ENCODE measurements at regions of chr1 and their contacts with region 1.

Region 1: DNA sequence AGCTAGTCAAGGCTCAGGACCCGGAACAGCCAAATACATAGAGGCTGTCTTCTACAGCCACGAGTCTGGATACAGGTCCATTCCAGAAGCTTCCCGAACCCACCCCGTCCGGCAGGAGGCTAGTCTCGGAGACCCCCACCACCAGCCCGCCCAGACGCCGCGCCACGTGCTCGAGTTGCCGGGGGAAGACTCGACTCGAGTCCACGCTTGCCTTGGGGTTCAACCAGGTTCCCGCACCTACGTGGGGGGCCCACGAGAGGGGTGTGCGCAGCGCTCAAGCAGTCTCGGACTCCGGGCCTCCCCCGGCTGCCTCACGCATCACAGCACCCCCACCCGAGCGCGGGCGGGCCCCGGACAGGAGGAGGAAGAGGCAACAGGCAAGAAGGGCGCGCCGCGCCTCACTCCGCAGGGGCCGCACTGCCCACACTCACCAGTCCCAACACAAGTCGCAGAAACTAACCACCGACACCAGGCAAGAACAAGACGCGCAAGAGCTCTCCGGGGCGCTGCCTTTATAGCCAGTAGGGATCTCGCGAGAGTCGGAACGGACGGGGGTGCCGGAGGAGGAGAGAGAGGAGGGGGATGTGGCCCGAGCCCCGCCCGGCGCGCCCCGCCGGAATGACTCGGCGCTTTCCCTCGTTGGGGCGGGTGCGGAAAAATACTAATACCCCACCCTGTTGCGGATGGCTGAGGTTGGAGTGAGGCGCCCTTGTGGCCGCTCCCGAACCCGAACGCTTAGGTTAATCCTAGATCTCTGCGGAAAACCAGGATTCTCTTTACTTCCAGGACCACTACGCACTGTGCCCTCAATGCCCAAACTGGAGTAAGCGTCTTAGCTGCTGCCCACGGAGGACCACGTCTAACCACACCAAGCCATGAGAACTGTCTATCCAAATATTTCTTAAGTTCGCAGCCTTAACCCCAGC is at the start of gene PRDX1:
- DNase-seq: peak; percentile 67
- H3K4me3 ChIP-seq: peak within 1 kb of the TSS; percentile 95
- CTCF ChIP-seq: peak; percentile 22

Region 2: DNA sequence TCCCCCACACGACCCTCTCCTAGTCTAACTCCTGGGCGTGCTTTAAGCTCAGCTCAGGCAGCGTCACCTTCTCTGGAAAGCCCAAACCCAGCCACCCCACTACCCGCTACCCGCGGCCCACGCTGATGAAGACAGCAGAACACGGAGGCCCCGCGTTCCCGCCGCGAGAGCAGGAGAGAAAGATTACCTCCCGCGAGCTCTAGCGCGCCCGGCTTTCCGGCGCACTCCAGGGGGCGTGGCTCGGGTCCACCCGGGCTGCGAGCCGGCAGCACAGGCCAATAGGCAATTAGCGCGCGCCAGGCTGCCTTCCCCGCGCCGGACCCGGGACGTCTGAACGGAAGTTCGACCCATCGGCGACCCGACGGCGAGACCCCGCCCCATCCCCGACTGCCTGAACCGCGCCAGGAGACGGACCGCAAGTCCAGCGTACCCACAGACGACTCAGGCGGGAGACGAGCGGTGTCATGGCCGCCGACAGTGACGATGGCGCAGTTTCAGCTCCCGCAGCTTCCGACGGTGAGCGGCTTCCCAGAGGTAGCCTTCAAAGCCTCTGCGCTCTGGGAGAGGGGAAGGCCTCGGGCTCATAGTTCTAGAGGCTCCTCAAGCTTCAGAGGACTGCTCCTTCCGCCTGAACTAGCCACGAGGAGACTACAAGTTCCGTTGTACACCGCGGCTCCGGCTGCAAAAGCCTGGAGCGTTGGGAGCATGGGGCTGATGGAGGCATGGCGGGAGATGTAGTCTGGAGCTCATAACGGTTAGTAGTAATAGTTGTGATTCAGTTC is 181.7 kb before region 1 on chr1 and contains the starts of genes MUTYH and TOE1:
- CTCF ChIA-PET with region 1: no interaction called
- POLR2A ChIA-PET with region 1: interaction called, 21 read pairs
- DNase-seq: peak; percentile 36
- H3K4me3 ChIP-seq: peak within 1 kb of the TSS; percentile 97
- CTCF ChIP-seq: no peak

Region 3: GRCh38 chr1:45499415-45499769 is 22.3 kb before region 1 on chr1:
- CTCF ChIA-PET with region 1: interaction called, 3 read pairs
- POLR2A ChIA-PET with region 1: interaction called, 54 read pairs
- DNase-seq: no peak
- H3K4me3 ChIP-seq: peak overlapping the region; percentile 93
- CTCF ChIP-seq: no peak

Region 4: DNA sequence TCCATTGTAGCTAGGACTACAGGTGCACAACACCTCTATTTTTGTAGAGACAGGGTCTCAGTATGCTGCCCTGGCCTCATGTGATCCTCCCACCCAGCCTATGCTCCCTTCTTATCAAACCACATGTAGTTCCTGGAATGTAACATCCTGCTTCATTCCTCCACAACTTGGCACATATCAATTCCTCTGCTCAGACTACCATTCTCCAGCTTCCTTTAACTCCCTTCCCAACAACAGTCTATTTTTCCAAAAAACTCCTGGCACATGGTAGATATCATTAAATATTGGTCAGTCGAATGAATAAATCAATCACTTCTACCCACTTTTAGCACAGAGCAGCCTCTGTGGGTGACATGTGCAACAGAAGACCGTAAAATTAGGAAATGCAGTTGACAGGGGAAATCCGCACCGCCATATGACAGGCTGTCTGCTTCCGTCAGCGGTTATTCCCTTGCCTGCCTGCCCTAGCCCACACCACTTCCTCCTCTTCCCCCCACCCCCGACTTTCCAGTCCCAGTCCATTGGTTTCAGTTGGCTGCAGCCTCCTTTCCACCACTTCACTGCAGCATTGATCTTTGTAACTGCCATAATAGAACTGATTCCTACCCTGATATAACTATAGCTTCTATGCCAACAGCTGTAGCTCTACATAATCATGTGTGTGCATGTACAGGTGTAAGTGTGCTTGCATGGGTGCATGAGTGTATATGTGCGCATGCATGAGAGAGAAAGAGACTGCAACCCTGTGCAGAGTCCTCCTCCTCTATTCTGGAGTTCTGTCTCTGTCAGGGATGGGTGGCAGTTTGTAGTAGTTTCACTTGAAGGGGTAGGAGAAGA is 22.1 kb after region 1 on chr1:
- CTCF ChIA-PET with region 1: interaction called, 4 read pairs
- POLR2A ChIA-PET with region 1: interaction called, 29 read pairs
- DNase-seq: no peak
- H3K4me3 ChIP-seq: no peak overlapping the region
- CTCF ChIP-seq: no peak

Region 5: DNA sequence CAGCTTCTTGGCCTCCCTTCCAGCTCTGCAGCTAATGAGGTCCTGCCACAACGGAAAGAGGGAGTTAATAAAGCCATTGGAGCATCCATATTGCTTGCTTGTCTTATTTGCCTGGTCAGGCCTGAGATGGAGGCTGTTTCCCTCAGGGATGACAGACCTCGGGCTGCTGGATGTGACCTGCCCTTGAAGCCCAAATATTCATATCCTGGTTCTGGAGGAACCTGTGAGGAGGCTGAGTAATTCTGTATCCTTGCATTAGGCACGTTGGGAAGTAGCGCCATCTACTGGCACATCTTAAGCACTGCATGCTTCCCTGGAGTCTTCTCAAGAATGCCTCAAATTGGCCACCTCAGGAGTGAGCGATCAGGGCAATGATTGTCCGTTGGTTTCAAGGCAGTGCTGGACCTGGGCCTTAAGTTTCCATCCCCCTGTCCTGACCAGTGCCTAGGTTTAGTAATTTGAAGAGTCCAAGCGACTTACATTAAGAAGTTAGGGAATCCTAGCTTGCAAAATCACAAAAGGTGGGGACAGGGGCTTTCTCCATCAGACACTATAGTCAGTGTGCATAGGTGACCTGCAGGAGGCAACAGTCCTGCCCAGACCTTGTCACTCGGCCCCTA is 48.4 kb after region 1 on chr1:
- CTCF ChIA-PET with region 1: interaction called, 41 read pairs
- POLR2A ChIA-PET with region 1: interaction called, 22 read pairs
- DNase-seq: peak; percentile 17
- H3K4me3 ChIP-seq: no peak overlapping the region
- CTCF ChIP-seq: peak; percentile 93

Region 6: DNA sequence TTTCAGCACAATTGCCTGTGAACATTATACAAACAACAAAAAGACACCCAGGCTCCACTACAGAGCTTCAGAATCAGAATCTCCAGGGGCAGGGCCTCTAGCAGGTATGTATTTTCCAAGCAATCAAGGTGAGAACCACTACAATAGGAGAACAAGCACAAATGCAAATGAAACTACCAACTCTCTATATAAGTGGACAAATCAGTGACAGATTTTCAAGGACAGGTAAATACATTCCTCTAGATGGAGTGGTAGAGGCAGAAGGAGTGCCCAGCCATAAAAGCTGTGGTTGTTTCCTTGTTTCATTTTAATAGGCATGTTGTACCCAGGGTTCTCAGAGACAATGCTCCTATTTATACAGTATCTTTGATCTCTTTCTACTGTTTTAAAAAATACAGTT is 122.3 kb after region 1 on chr1:
- CTCF ChIA-PET with region 1: no interaction called
- POLR2A ChIA-PET with region 1: no interaction called
- DNase-seq: no peak
- H3K4me3 ChIP-seq: no peak overlapping the region
- CTCF ChIP-seq: no peak

Measured in AG04449 (cell line).